K562 (cell line): ENCODE measurements at regions of chr5 and their contacts with region 1.

Region 1: DNA sequence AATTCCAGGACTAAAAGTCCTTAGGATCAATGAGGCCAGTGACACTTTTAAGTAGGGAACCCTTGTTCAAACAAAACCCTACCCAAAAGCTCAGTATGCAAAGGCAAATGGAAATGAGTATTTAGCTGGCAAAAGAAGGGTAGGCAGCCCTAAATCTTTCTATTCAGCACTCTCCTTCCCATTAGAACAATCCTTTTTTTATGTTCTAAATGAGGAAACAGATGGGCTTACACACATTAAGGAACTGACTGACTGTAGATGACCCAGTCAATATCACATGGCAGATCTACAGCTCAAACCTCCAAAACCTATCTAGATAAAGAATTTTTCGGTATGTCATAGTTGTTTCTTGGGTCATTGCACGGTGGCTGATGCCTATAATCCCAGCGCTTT is 7.2 kb downstream of the CSNK1A1 start:
- DNase-seq: no peak
- ATAC-seq: peak; percentile 33
- H3K4me3 ChIP-seq: no peak overlapping the region
- H3K27ac ChIP-seq: peak overlapping the region; percentile 51; the same call in 1 of the 3 replicates
- H3K4me1 ChIP-seq: peaks cover 13 to 29% of the 10 kb centered on the region in 2 experiments; a peak in 4 of 5 replicates
- H3K27me3 ChIP-seq: no peaks in the 10 kb centered on the region
- CTCF ChIP-seq: no peak
- EP300 ChIP-seq: no peak
- POLR2A ChIP-seq: peak; percentile 25; the same call in 1 of the 2 replicates
- RAD21 ChIP-seq: no peak

Region 2: GRCh38 chr5:149517461-149518122 is 26.4 kb before region 1 on chr5:
- CTCF ChIA-PET with region 1: no interaction called
- POLR2A ChIA-PET with region 1: interaction called, 16 read pairs
- in situ Hi-C with region 1: no loop called
- intact Hi-C with region 1: no loop called
- DNase-seq: no peak
- ATAC-seq: peak; percentile 19; the same call in 1 of the 3 replicates
- H3K4me3 ChIP-seq: no peak overlapping the region
- H3K27ac ChIP-seq: no peak overlapping the region
- H3K4me1 ChIP-seq: peaks cover 0 to 15% of the 10 kb centered on the region in 2 experiments; a peak in 3 of 5 replicates
- H3K27me3 ChIP-seq: no peaks in the 10 kb centered on the region
- CTCF ChIP-seq: no peak
- EP300 ChIP-seq: no peak
- POLR2A ChIP-seq: no peak
- RAD21 ChIP-seq: no peak

Region 3: GRCh38 chr5:149526845-149527580 is 17.0 kb before region 1 on chr5:
- CTCF ChIA-PET with region 1: no interaction called
- POLR2A ChIA-PET with region 1: interaction called, 16 read pairs
- in situ Hi-C with region 1: no loop called
- intact Hi-C with region 1: no loop called
- DNase-seq: no peak
- ATAC-seq: peak; percentile 21
- H3K4me3 ChIP-seq: no peak overlapping the region
- H3K27ac ChIP-seq: peak overlapping the region; percentile 29; the same call in 1 of the 3 replicates
- H3K4me1 ChIP-seq: peaks cover 12 to 28% of the 10 kb centered on the region in 2 experiments
- H3K27me3 ChIP-seq: no peaks in the 10 kb centered on the region
- CTCF ChIP-seq: no peak
- EP300 ChIP-seq: no peak
- POLR2A ChIP-seq: no peak
- RAD21 ChIP-seq: no peak